MCF 10A (cell line): ENCODE measurements at regions of chr6 and their contacts with region 1.

Region 1: DNA sequence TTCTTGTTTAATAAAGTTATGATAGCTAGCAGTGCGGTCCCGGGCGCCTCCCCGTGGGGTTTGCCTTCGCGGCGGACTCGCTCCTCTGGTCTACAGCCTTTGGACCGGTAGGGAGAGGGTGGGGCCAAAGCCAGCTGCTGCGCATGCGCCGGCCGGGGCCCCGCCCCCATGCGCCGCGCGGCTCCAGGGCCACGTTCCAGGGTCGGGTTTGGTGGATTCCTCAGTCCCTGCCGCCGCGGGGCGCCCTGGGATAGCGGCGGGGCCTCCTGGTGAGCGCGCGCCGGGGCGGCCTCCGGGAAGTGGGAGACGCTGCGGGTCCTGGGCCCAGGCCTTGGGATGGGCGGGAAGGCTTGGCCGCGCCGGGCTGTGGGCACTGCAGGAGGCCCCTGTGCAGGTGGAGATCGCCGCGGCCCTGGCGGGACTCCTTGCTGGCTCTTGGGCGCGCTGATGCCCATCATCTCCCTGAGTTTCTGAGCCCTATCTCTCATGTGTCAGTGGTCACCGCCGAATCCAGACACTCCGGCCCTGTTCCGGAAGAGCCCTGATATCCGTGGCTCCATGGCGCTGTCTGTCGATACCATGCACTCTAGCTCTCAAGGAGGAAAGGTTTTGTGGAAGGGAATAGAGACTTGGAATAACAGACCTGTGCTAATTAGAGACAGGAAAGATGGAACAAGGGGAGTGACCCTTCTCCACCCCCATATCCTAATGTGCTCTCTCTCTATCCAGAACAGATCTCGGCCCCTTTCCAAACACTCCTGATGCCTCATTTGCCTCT is at the start of gene VARS2:
- DNase-seq: peak; percentile 93
- H3K4me3 Mint-ChIP-seq: peak within 1 kb of the TSS; percentile 77
- H3K27ac Mint-ChIP-seq: peak within 1 kb of the TSS; percentile 92
- H3K4me1 Mint-ChIP-seq: peaks cover 19% of the 10 kb centered on the region
- H3K27me3 Mint-ChIP-seq: no peaks in the 10 kb centered on the region
- CTCF ChIP-seq: no peak
- total RNA-seq, gene VARS2: 38.8 and 52.7 TPM in 2 replicates

Region 2: GRCh38 chr6:30877419-30878371 is 36.6 kb before region 1 on chr6:
- CTCF ChIA-PET with region 1: interaction called, 19 read pairs
- POLR2A ChIA-PET with region 1: interaction called, 100 read pairs
- intact Hi-C with region 1: no loop called
- DNase-seq: peak; percentile 93
- H3K4me3 Mint-ChIP-seq: peak overlapping the region; percentile 61
- H3K27ac Mint-ChIP-seq: peak overlapping the region; percentile 95
- H3K4me1 Mint-ChIP-seq: peaks cover 40% of the 10 kb centered on the region
- H3K27me3 Mint-ChIP-seq: no peaks in the 10 kb centered on the region
- CTCF ChIP-seq: peak; percentile 90

Region 3: GRCh38 chr6:30935018-30935417 is 20.8 kb after region 1 on chr6:
- CTCF ChIA-PET with region 1: interaction called, 71 read pairs
- POLR2A ChIA-PET with region 1: interaction called, 15 read pairs
- intact Hi-C with region 1: no loop called
- DNase-seq: peak; percentile 86
- H3K4me3 Mint-ChIP-seq: peak overlapping the region; percentile 2
- H3K27ac Mint-ChIP-seq: peak overlapping the region; percentile 94
- H3K4me1 Mint-ChIP-seq: peaks cover 45% of the 10 kb centered on the region
- H3K27me3 Mint-ChIP-seq: no peaks in the 10 kb centered on the region
- CTCF ChIP-seq: no peak

Region 4: DNA sequence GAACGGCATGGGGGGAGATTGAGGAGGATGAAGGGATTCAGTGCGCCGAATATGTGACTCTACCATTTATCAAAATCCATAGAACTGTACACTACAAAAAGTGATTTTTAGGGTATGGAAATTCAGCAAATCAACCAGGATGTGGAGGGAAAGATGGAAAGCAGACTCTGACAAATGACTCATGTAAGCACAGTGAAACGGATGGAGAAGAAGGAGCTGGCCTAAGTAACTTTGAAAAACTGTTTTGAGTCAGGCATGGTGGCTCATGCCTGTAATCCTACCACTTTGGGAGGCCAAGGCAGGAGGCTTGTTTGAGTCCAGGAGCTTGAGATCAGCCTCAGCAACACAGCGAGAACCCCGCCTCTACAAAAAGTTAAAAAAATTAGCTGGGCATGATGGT is 135.3 kb after region 1 on chr6:
- CTCF ChIA-PET with region 1: interaction called, 19 read pairs
- POLR2A ChIA-PET with region 1: interaction called, 3 read pairs
- intact Hi-C with region 1: no loop called
- DNase-seq: no peak
- H3K4me3 Mint-ChIP-seq: no peak overlapping the region
- H3K27ac Mint-ChIP-seq: no peak overlapping the region
- H3K4me1 Mint-ChIP-seq: peaks cover 11% of the 10 kb centered on the region
- H3K27me3 Mint-ChIP-seq: no peaks in the 10 kb centered on the region
- CTCF ChIP-seq: no peak

Region 5: GRCh38 chr6:31079656-31080261 is 165.5 kb after region 1 on chr6:
- CTCF ChIA-PET with region 1: interaction called, 749 read pairs
- POLR2A ChIA-PET with region 1: interaction called, 34 read pairs
- intact Hi-C with region 1: no loop called
- DNase-seq: peak; percentile 69
- H3K4me3 Mint-ChIP-seq: no peak overlapping the region
- H3K27ac Mint-ChIP-seq: no peak overlapping the region
- H3K4me1 Mint-ChIP-seq: peaks cover 16% of the 10 kb centered on the region
- H3K27me3 Mint-ChIP-seq: no peaks in the 10 kb centered on the region
- CTCF ChIP-seq: peak; percentile 62

Region 6: GRCh38 chr6:31114970-31115849 is 200.9 kb after region 1 on chr6:
- CTCF ChIA-PET with region 1: interaction called, 23 read pairs
- POLR2A ChIA-PET with region 1: interaction called, 15 read pairs
- intact Hi-C with region 1: no loop called
- DNase-seq: peak; percentile 81
- H3K4me3 Mint-ChIP-seq: peak overlapping the region; percentile 79
- H3K27ac Mint-ChIP-seq: peak overlapping the region; percentile 98
- H3K4me1 Mint-ChIP-seq: peaks cover 21% of the 10 kb centered on the region
- H3K27me3 Mint-ChIP-seq: no peaks in the 10 kb centered on the region
- CTCF ChIP-seq: peak; percentile 33